AG04449 (cell line): ENCODE measurements at regions of chr10 and their contacts with region 1.

Region 1: GRCh38 chr10:119750391-119751230 is 24.8 kb downstream of the INPP5F start:
- DNase-seq: peak; percentile 36
- H3K4me3 ChIP-seq: no peak overlapping the region
- CTCF ChIP-seq: peak; percentile 90

Region 2: DNA sequence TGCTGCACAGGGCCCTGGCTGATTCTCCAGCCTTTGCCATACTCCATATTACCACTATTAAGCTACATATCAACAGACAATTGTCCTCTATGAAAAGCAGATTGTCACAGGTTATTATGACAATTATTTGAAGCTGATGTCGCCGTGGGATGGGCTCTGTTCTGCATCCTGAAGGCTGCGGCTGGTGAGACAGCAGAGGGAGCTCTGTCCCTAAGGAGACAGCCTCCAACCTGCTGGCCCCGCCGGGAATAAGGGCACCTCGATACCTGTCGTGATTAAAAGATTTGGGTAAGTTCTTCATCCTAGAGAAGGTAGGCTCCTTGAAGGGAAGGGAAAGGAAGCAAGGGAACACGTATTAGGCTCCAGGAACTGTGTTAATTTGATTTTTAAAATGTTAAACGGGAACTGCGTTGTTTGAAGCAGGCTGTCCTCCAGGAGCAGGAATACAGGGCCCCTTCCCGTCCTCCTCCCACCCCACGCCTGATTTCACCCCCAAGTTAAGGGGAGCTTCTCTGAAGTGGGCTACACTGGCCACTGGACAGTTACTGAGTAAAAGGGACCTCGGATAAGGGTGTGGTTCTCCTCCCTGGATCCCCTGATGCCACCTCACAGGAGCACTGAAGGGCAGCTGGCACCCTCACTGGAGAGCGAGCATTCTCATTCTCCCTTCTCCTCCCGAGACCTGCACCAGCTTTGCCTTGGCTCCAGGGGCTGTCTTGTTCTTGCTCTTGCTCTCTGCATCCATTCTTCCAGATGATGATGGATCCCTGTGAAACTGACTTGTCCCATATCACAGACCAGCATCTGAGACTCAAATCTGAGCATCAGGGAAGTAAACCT is 142.1 kb before region 1 on chr10:
- CTCF ChIA-PET with region 1: interaction called, 11 read pairs
- POLR2A ChIA-PET with region 1: no interaction called
- DNase-seq: no peak
- H3K4me3 ChIP-seq: no peak overlapping the region
- CTCF ChIP-seq: peak; percentile 59

Region 3: GRCh38 chr10:119676993-119677525 is 73.6 kb before region 1 on chr10:
- CTCF ChIA-PET with region 1: no interaction called
- POLR2A ChIA-PET with region 1: no interaction called
- DNase-seq: no peak
- H3K4me3 ChIP-seq: no peak overlapping the region
- CTCF ChIP-seq: no peak

Region 4: GRCh38 chr10:119737827-119738226 is 12.8 kb before region 1 on chr10:
- CTCF ChIA-PET with region 1: interaction called, 50 read pairs
- POLR2A ChIA-PET with region 1: no interaction called
- DNase-seq: peak; percentile 54
- H3K4me3 ChIP-seq: no peak overlapping the region
- CTCF ChIP-seq: no peak

Region 5: GRCh38 chr10:119807960-119808697 is 57.5 kb after region 1 on chr10:
- CTCF ChIA-PET with region 1: interaction called, 14 read pairs
- POLR2A ChIA-PET with region 1: no interaction called
- DNase-seq: peak; percentile 63
- H3K4me3 ChIP-seq: no peak overlapping the region
- CTCF ChIP-seq: no peak

Region 6: GRCh38 chr10:119849031-119849789 is 98.6 kb after region 1 on chr10:
- CTCF ChIA-PET with region 1: interaction called, 664 read pairs
- POLR2A ChIA-PET with region 1: no interaction called
- DNase-seq: peak; percentile 46
- H3K4me3 ChIP-seq: no peak overlapping the region
- CTCF ChIP-seq: no peak

Region 7: DNA sequence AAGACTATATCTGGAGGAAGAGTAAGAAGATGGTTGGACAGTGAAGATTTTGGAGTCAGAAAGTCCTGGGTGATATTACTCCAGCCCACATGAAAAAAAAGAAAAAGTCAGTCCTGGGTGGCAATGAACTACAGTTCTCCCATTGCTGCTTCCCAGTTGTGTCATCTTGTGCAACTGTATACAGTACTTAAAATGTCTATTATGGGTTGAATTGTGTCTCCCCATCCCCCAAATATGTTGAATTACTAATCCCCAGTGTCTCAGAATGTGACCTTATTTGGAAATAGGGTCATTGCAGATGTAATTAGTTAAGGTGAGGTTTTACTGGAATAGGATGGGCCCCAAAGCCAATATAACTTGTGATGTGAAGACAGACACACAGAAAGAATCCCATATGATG is 157.6 kb after region 1 on chr10:
- CTCF ChIA-PET with region 1: interaction called, 11 read pairs
- POLR2A ChIA-PET with region 1: no interaction called
- DNase-seq: no peak
- H3K4me3 ChIP-seq: no peak overlapping the region
- CTCF ChIP-seq: no peak